ENCODE measurements at regions of chr4 and their contacts with region 1.

Region 1: DNA sequence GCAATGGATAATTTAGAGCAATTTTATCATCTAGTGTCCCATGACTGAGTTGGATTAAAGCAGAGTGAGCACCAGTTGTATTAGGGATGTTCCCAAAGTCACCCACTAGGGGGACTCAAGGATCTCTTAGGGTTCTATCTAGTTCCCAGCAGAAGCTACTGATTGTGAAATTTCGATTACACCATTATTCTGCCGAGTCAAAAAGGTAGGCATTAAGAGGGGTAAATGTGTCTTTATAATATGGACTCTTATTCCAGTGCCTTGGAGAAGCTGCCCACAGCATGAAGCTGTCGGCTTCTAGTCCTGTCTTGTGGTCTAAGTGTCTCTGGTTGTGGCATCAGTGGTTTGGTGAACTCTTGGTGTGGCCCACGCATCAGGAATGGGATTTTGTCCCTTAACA is 53.3 kb downstream of the RGS12 start:
- DNase-seq: peak; percentile 92
- H3K4me3 Mint-ChIP-seq: no peak overlapping the region
- H3K27ac Mint-ChIP-seq: no peak overlapping the region
- H3K4me1 Mint-ChIP-seq: peaks cover 9% of the 10 kb centered on the region
- H3K27me3 Mint-ChIP-seq: no peaks in the 10 kb centered on the region
- CTCF ChIP-seq: peak; percentile 91

Region 2: DNA sequence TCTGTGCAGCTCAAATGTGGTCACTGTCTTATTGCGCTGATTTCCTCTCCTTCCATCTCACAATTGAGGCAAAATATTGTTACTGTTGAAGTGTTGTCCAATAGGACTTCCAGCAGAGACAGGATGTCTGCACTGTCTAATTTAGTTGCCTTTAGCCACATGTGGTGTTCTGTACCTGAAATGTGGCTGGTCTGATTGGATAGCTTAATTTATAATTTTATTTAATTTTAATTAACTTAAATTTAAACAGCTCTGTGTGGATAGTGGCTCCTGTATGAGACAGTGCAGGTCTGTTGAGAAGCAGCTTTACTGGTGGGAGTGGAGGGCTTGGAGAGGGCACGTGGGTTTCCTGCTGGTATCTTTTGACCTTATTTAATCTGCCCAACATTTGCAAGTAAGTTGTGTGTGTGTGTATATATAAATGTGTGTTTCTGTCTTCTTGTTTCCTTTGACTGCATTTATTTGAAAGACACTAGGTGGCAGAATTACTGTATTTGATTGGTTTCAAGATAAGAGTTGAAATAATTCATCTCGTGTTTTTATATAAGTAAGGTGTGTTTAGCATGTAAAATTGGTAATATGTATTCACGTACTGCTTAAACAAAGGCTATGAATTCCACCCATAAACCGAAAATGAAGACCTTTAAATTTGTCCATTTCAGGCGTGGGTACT is 152.5 kb before region 1 on chr4:
- CTCF ChIA-PET with region 1: no interaction called
- POLR2A ChIA-PET with region 1: no interaction called
- intact Hi-C with region 1: loop called (anchors 5 kb)
- DNase-seq: peak; percentile 6
- H3K4me3 Mint-ChIP-seq: no peak overlapping the region
- H3K27ac Mint-ChIP-seq: no peak overlapping the region
- H3K4me1 Mint-ChIP-seq: peaks cover 9% of the 10 kb centered on the region
- H3K27me3 Mint-ChIP-seq: no peaks in the 10 kb centered on the region
- CTCF ChIP-seq: peak; percentile 34

Region 3: GRCh38 chr4:3328814-3329663 is 17.1 kb before region 1 on chr4:
- CTCF ChIA-PET with region 1: interaction called, 11 read pairs
- POLR2A ChIA-PET with region 1: no interaction called
- intact Hi-C with region 1: no loop called
- DNase-seq: no peak
- H3K4me3 Mint-ChIP-seq: no peak overlapping the region
- H3K27ac Mint-ChIP-seq: no peak overlapping the region
- H3K4me1 Mint-ChIP-seq: no peaks in the 10 kb centered on the region
- H3K27me3 Mint-ChIP-seq: no peaks in the 10 kb centered on the region
- CTCF ChIP-seq: no peak

Region 4: GRCh38 chr4:3388471-3389232 is 42.5 kb after region 1 on chr4:
- CTCF ChIA-PET with region 1: interaction called, 10 read pairs
- POLR2A ChIA-PET with region 1: interaction called, 5 read pairs
- intact Hi-C with region 1: loop called (anchors 1 kb)
- DNase-seq: peak; percentile 49
- H3K4me3 Mint-ChIP-seq: peak overlapping the region; percentile 81
- H3K27ac Mint-ChIP-seq: peak overlapping the region; percentile 81
- H3K4me1 Mint-ChIP-seq: peaks cover 52% of the 10 kb centered on the region
- H3K27me3 Mint-ChIP-seq: no peaks in the 10 kb centered on the region
- CTCF ChIP-seq: no peak

Region 5: DNA sequence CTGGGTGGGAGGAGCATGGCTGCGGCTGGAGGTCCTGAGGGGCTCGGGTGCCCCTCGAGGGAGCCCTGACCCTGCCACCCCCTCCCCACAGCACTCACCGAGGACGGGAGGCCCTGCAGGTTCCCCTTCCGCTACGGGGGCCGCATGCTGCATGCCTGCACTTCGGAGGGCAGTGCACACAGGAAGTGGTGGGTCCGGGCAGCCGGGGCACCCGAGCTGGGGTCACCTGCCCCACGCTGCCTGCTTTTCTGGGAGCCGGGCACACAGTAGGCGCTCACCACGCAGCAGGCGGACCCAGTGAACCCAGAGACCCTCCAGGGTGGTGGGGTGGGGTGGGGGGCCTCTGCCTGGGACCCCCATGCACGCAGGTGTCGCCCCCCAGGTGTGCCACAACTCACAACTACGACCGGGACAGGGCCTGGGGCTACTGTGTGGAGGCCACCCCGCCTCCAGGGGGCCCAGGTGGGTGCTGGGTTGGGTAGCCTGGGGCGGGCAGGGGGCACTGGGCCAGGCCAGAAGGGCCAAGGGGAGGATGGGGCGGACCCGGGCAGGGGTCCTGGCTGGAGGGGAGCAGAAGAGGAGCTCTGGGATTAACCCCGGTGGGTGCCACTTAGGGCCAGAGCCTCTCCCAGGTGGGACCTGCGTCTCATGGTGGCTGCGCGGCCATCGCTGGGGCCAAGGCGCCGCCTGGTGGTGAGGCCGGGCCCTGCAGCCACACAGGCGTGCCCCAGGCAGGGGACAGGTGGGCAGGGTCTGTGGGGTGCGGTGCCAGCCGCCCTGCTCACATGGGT is 97.0 kb after region 1 on chr4:
- CTCF ChIA-PET with region 1: interaction called, 14 read pairs
- POLR2A ChIA-PET with region 1: interaction called, 5 read pairs
- intact Hi-C with region 1: loop called (anchors 1 kb)
- DNase-seq: peak; percentile 56
- H3K4me3 Mint-ChIP-seq: no peak overlapping the region
- H3K27ac Mint-ChIP-seq: no peak overlapping the region
- H3K4me1 Mint-ChIP-seq: peaks cover 10% of the 10 kb centered on the region
- H3K27me3 Mint-ChIP-seq: no peaks in the 10 kb centered on the region
- CTCF ChIP-seq: peak; percentile 97

Region 6: DNA sequence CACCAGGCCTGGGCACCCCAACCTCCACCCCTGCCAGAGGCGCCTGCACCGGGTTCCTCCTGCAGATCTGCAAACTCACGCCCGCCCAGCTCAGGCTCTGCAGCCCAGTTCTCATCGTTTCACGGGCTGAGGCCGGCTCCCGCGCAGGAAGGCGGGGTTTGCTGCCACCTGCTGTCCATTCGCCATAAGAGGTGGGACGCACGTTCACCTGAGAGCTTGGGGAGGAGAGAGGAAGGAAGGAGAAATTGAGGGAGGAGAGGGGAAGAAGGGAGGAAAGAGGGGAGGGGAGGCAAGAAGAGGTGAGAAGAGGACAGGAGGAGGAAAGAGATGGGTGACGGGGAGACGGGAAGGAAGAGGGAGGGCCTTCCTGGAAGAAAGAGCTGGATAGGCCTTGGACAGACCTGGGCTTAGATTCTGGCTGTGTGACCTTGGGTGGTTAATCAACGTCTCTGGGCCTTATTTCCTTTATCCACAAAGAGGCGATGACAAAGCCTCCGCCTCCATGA is 534.5 kb after region 1 on chr4:
- CTCF ChIA-PET with region 1: no interaction called
- POLR2A ChIA-PET with region 1: no interaction called
- intact Hi-C with region 1: loop called (anchors 2 kb)
- DNase-seq: peak; percentile 71
- H3K4me3 Mint-ChIP-seq: no peak overlapping the region
- H3K27ac Mint-ChIP-seq: no peak overlapping the region
- H3K4me1 Mint-ChIP-seq: no peaks in the 10 kb centered on the region
- H3K27me3 Mint-ChIP-seq: peaks cover 85% of the 10 kb centered on the region
- CTCF ChIP-seq: peak; percentile 69